Gastrocnemius medialis (tissue), 4 donors: ENCODE measurements at regions of chr9 and their contacts with region 1.

Region 1: DNA sequence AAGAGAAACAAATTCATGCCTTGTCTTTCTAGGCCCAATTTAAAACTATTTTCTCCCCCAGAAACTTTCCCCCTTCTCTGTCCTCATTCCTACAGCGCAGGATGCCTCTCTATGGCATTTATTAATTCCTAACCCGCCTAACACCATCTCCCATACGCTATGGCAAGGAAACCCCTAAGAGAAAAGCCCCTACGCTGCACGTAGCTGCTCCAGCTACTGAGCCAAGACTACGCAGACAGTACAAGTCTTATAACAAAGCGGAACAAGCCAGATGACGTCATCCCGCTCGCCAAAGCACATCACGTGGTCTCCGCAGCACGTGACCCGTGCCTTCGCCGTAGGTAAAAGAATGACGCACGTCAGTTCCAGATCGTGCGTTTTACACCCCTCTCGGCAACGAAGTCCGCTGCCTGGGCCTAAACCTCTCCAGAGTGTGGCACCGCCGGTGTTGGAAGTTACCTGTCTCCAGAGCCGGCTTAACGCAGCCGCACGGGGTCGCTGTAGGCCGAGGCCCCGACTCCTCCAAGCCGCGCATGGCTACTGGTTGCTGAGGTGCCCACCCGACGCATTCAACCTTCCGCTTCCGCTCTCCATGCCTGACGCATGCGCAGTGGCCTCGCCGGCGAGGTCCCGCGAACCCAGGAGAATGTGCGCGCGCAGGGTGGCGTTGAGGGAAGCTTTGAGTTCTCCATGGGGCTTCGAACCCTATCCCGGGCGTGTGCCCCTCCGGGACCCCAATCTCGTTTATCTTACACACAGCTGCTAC is at the start of gene TRMO:
- DNase-seq: peak; percentile 93 to 97
- ATAC-seq: peak; percentile 94 to 97
- H3K4me3 ChIP-seq: peak within 1 kb of the TSS; percentile 66 to 85 (median 68)
- H3K27ac ChIP-seq: peak within 1 kb of the TSS; percentile 90 to 98 (median 94)
- H3K4me1 ChIP-seq: peaks cover 17 to 34% of the 10 kb centered on the region in 2 donors
- H3K27me3 ChIP-seq: peaks cover 0 to 4% (median 0%) of the 10 kb centered on the region in 3 donors
- CTCF ChIP-seq: peak; percentile 55 to 86 (median 76)
- POLR2A ChIP-seq: peak; percentile 75 to 81
- total RNA-seq, gene TRMO: 10.5 to 23.4 (median 15.7) TPM

Region 2: DNA sequence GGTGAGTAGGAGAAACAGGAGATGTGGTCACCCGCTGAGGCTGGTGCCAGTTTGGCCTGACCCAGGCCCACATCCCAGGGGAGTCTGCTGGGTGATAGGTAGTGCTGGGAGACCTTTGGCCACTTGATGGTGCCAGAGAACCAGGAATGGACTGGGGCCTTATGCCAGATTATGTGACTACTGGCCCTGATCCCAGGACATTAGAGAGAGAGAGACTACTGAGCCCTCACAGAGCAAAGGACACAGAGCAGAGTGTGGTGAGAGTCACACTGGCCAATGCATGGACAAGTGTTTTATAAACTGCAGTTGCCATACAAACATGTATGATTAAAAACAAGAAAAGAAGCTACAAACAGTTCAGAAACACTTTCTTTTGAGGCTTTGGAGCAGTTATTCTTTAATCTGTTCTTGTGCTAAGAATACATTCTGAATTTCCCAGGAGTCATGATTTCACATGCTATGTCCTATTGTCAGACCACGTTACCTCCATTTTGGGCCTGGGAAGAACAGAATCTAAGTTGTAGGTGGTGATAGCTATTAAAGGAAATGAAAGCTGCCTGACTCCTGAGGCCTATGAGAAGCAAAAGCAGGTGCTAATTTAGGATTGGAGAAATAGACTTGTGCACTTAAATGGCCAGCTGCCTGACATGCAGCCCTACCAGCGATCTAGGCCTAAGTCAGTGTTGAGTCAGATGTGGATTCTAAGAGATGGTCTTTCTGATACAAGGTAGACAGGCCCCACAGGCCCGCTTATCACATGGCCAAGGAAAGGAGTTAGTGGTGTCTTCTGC is 453.3 kb before region 1 on chr9:
- in situ Hi-C with region 1: loop called in 1 of 4 experiments (anchors 25 kb)
- intact Hi-C with region 1: no loop called
- DNase-seq: peak; percentile 76 to 89
- ATAC-seq: peak; percentile 99 to 100
- H3K4me3 ChIP-seq: no peak overlapping the region
- H3K27ac ChIP-seq: peak overlapping the region; percentile 75 to 84 (median 79)
- H3K4me1 ChIP-seq: peaks cover 7 to 17% of the 10 kb centered on the region in 2 donors
- H3K27me3 ChIP-seq: no peaks in the 10 kb centered on the region
- CTCF ChIP-seq: peak; percentile 88 to 93 (median 90)
- POLR2A ChIP-seq: no peak

Region 3: GRCh38 chr9:97982683-97983588 is 60.8 kb after region 1 on chr9 and contains the start of gene ANP32B:
- in situ Hi-C with region 1: no loop called
- intact Hi-C with region 1: loop called (anchors 1 kb)
- DNase-seq: peak; percentile 73 to 85
- ATAC-seq: peak; percentile 55 to 59
- H3K4me3 ChIP-seq: peak within 1 kb of the TSS; percentile 84 to 99 (median 89)
- H3K27ac ChIP-seq: peak within 1 kb of the TSS; percentile 93 to 99 (median 96)
- H3K4me1 ChIP-seq: peaks cover 48 to 55% of the 10 kb centered on the region in 2 donors
- H3K27me3 ChIP-seq: no peaks in the 10 kb centered on the region
- CTCF ChIP-seq: peak; percentile 73 to 99 (median 97)
- POLR2A ChIP-seq: peak; percentile 58 to 63
- total RNA-seq, gene ANP32B: 8.2 to 24.5 (median 17.8) TPM

Region 4: GRCh38 chr9:98192503-98193335 is 270.6 kb after region 1 on chr9 and contains the start of gene CORO2A:
- in situ Hi-C with region 1: no loop called
- intact Hi-C with region 1: loop called (anchors 5 kb)
- DNase-seq: no peak
- ATAC-seq: peak; percentile 66 to 77
- H3K4me3 ChIP-seq: peak within 1 kb of the TSS; percentile 63 to 73 (median 67)
- H3K27ac ChIP-seq: peak within 1 kb of the TSS; percentile 27 to 58 (median 41)
- H3K4me1 ChIP-seq: peaks cover 0 to 7% of the 10 kb centered on the region in 2 donors
- H3K27me3 ChIP-seq: no peaks in the 10 kb centered on the region
- CTCF ChIP-seq: peak in 2 of 5 experiments; percentile 7 to 22
- POLR2A ChIP-seq: peak; percentile 9 to 42
- total RNA-seq, gene CORO2A: 0.05 to 0.42 (median 0.19) TPM

Region 5: DNA sequence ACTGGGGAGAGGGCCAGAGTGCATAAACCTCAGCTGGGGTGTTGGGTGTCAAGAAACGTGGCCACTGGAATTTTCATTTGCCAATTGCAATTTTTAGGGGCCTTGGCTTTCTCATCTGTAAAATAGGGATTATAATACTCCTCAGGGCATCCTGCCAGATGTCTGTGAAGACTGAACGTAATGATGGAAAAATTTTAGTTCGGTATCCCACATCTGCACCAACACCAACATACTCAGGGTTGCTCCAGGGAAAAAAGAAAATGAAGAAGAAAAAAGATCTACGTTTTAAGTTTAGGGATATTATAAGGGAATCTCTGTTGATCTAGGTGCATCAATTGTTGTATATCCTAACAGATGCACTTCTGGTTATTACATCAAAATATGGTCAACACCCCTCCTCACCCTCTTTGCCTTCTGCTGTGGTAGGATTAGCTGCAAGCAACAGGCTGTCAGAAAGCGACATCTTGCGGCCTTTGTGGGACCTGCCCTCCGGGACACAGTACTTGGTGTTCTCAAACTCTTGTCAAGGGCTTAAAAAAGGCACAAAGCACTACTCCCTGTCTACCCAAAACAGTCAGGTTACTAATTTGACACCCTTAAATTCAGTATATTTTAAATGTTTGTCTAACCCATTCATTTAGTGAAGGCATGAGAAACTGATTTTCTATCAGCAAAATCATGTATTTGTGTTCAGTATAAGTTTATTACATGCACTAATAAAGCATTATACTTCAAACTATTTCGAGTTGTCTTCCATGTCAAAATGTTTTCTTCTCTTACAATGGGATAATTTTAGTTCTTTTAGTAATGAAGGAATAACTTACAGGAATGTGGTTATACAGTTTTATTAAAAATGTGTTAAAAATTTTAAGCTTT is 341.6 kb after region 1 on chr9:
- in situ Hi-C with region 1: loop called (anchors 5 to 25 kb)
- intact Hi-C with region 1: loop called (anchors 1 kb)
- DNase-seq: peak; percentile 57 to 68
- ATAC-seq: peak; percentile 89 to 92
- H3K4me3 ChIP-seq: no peak overlapping the region
- H3K27ac ChIP-seq: no peak overlapping the region
- H3K4me1 ChIP-seq: no peaks in the 10 kb centered on the region
- H3K27me3 ChIP-seq: peaks cover 0 to 4% (median 0%) of the 10 kb centered on the region in 3 donors
- CTCF ChIP-seq: peak; percentile 69 to 93 (median 86)
- POLR2A ChIP-seq: no peak